PC-9 (cell line): ENCODE measurements at regions of chr9 and their contacts with region 1.

Region 1: GRCh38 chr9:72485821-72486593 is 35.4 kb upstream of the TMC1 start:
- DNase-seq: no peak
- H3K4me3 ChIP-seq: no peak overlapping the region
- H3K27ac ChIP-seq: no peak overlapping the region
- H3K4me1 ChIP-seq: peaks cover 11% of the 10 kb centered on the region
- H3K27me3 ChIP-seq: no peaks in the 10 kb centered on the region
- CTCF ChIP-seq: no peak

Region 2: GRCh38 chr9:72396247-72397091 is 89.5 kb before region 1 on chr9:
- CTCF ChIA-PET with region 1: no interaction called
- POLR2A ChIA-PET with region 1: interaction called, 12 read pairs
- intact Hi-C with region 1: no loop called
- DNase-seq: peak; percentile 4 to 96
- H3K4me3 ChIP-seq: peak overlapping the region; percentile 14; the same call in 1 of the 2 replicates
- H3K27ac ChIP-seq: peak overlapping the region; percentile 51
- H3K4me1 ChIP-seq: peaks cover 19% of the 10 kb centered on the region
- H3K27me3 ChIP-seq: no peaks in the 10 kb centered on the region
- CTCF ChIP-seq: no peak